ENCODE measurements at regions of chr1 and their contacts with region 1.

Region 1: DNA sequence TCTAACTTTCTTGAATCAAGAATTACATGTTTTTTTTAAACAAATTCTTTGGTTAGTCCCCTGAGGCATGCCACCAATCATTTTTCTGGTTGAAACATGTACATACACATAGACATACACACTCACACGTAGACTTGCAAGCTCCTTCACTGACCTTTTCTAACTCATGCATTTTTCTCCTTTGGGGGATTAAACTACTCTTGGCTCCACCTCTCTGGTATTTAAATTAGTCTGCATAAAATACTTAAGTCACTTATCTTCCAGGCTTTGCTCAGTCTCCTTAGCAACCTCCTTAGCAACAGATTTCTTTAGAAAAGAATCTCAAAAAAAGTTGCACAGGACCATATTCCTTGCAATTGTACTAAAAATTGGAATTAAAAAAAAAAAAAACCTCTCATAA is 440.9 kb upstream of the LRRC7 start:
- DNase-seq: no peak
- H3K4me3 ChIP-seq: no peak overlapping the region
- H3K27ac ChIP-seq: no peak overlapping the region
- H3K4me1 ChIP-seq: no peaks in the 10 kb centered on the region
- H3K27me3 ChIP-seq: no peaks in the 10 kb centered on the region
- CTCF ChIP-seq: no peak

Region 2: DNA sequence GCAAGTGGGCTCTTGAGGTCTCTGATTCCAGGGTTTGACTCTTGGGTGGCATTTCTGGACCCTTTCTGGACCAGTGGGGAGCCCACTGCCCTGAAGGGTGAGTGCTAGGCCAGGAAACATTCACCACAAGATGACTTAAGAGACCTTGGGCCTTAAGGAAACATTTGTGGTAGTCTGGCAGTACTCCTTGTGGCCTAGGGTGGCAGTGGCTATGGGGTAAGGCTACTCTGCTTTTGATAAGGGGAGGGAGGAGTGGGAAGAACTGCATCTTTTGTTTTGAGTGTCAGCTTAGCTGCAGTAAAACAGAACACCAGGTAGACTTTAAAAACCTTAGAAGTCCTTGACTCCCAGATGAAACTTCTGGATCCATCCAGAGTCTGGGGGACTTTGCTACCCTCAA is 88.4 kb before region 1 on chr1:
- CTCF ChIA-PET with region 1: no interaction called
- dilution Hi-C with region 1: no loop called
- in situ Hi-C with region 1: loop called in 1 of 2 experiments (anchors 25 kb)
- intact Hi-C with region 1: no loop called
- DNase-seq: no peak
- H3K4me3 ChIP-seq: no peak overlapping the region
- H3K27ac ChIP-seq: no peak overlapping the region
- H3K4me1 ChIP-seq: no peaks in the 10 kb centered on the region
- H3K27me3 ChIP-seq: no peaks in the 10 kb centered on the region
- CTCF ChIP-seq: no peak

Measured in mammary epithelial cell (primary cell).